Colonic mucosa (tissue), 4 donors: ENCODE measurements at regions of chr7 and their contacts with region 1.

Region 1: DNA sequence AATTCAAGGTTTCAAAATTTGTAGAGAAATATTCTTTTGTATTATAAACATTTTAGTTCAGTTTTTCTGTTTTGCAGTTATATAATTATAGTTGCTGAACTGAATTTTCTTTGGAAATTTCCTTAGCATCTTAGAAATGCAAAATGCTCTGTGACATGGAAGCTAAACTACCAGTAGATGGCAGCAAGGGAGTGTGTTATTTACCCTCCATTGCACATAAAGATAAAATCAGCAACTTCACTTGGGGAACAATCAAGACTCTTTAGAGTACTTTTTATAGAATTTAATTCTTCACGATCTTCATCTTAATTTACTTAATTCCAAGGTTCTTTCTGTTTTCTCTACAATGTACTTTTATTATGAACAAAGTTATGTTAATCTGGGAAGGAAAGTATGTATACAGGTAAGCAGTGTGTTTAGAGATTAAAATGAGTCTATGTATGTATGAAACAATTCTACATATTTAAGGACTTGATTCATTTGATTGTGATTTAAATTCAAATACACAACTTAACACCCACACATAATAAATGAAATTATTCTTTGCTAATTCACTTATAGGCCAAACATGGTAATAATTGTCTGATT is 404.2 kb downstream of the THSD7A start:
- DNase-seq: no peak
- H3K4me3 ChIP-seq: no peak overlapping the region
- H3K27ac ChIP-seq: no peak overlapping the region
- H3K4me1 ChIP-seq: no peaks in the 10 kb centered on the region
- H3K27me3 ChIP-seq: no peaks in the 10 kb centered on the region
- CTCF ChIP-seq: peak; percentile 63

Region 2: DNA sequence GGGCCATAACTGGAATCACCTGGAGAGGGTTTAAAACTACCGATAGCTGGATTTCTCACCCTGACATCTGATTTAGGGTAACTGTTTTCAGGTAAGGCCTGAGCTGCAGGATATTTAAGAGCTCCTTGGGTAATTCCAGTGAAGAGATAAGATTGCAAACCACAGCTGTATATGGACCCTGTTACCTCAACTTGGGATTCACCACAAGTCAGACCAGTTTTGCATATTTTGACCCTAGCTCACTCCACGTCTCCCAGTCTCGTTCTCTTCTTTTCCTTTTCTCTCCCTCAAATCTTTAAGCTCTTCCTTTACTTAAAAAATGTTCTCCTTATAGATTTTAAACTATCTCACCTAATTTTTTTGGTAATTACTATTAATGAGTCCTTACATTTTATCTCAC is 139.8 kb after region 1 on chr7:
- intact Hi-C with region 1: loop called (anchors 10 kb)
- DNase-seq: no peak
- H3K4me3 ChIP-seq: no peak overlapping the region
- H3K27ac ChIP-seq: no peak overlapping the region
- H3K4me1 ChIP-seq: no peaks in the 10 kb centered on the region
- H3K27me3 ChIP-seq: no peaks in the 10 kb centered on the region
- CTCF ChIP-seq: no peak

Region 3: GRCh38 chr7:12067141-12067831 is 639.5 kb after region 1 on chr7:
- intact Hi-C with region 1: loop called (anchors 5 kb)
- DNase-seq: peak; percentile 72
- H3K4me3 ChIP-seq: no peak overlapping the region
- H3K27ac ChIP-seq: no peak overlapping the region
- H3K4me1 ChIP-seq: no peaks in the 10 kb centered on the region
- H3K27me3 ChIP-seq: no peaks in the 10 kb centered on the region
- CTCF ChIP-seq: peak; percentile 64

Region 4: DNA sequence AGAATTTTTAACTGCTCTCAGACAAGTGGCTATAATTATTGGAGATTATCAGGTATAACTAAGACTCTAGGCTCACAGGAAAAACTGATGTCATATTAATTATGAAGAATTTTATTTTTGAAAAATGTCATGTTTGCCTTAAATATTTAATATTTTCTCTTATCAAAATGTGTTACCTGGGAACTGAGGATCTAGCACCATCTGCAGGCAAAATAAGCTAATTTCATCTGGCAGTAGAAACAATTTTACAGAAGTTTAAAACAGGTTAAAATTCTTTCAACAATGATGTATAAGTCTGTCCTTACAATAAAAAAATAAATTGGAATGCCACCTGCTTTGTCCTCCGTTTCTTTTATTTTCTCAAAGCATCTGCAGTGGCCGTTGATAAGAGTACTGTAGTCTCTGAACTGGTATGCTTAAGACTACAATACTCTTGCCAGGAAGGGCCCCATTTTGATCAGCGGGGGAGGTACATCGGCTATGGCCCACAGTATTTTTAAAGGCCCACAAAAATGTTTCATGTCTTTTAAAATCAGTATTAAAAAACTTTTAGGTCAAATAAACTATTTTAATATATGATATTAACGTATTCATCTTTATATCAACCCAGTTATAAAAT is 894.6 kb after region 1 on chr7:
- intact Hi-C with region 1: loop called (anchors 10 kb)
- DNase-seq: no peak
- H3K4me3 ChIP-seq: no peak overlapping the region
- H3K27ac ChIP-seq: no peak overlapping the region
- H3K4me1 ChIP-seq: no peaks in the 10 kb centered on the region
- H3K27me3 ChIP-seq: no peaks in the 10 kb centered on the region
- CTCF ChIP-seq: peak; percentile 51